Naive thymus-derived CD4-positive, alpha-beta T cell (primary cell): ENCODE measurements at regions of chr22 and their contacts with region 1.

Region 1: DNA sequence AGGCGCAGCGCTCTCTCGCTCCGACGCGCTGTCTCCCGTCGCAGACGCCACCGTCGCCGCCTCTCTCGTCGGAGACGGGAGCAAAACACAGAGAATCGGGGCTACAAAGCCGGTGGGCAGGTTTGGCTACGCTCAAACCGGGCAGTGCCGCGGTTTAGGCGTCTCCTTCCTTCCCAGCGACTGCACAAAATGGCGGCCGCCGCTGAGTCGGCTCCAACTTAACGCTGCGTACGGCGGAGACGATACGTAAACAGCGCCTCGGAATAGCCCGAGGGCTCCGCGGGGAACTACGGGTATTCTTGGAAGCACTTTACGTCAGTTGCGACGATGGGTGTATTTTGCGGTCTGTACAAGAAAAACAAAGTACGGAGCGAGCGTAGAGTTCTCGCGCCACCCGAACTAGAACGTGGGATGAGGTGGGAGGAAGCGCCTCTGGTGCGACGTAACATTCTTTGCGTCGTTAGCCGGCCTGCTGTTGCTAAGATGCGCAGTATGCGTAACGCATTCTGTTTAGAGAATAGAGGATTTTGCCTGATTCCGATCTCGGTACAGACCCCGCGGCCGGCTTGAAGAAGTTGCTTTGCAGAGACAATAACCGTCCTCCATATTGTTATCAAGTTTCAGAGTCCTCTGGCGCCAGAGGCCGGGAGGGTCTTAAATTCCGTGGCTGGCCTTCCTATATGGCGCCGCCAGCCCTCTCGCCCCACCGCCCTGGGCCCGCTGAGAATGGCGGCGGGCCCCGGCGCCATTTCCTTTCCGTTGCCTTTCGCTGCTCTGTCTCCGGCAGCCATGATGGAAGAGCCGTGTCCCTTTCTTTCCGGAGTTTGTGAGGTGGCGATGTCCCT is at the start of gene DDX17:
- DNase-seq: peak; percentile 89 to 99 (median 96)
- ATAC-seq: peak; percentile 94
- H3K4me3 ChIP-seq: peak within 1 kb of the TSS; percentile 88
- H3K4me3 Mint-ChIP-seq: peak within 1 kb of the TSS; percentile 92 to 100 (median 99)
- H3K27ac ChIP-seq: peak within 1 kb of the TSS; percentile 100
- H3K27ac Mint-ChIP-seq: peak within 1 kb of the TSS; percentile 100
- H3K4me1 ChIP-seq: peaks cover 35 to 37% of the 10 kb centered on the region in 2 donors
- H3K4me1 Mint-ChIP-seq: peaks cover 39 to 57% (median 48%) of the 10 kb centered on the region in 7 donors
- H3K27me3 ChIP-seq: no peaks in the 10 kb centered on the region
- H3K27me3 Mint-ChIP-seq: peaks cover 0 to 4% (median 0%) of the 10 kb centered on the region in 5 donors
- total RNA-seq, gene DDX17: 478 to 1,097 (median 684) TPM

Region 2: GRCh38 chr22:38201710-38202436 is 304.5 kb before region 1 on chr22 and contains the start of gene MAFF:
- CTCF ChIA-PET with region 1: no interaction called
- POLR2A ChIA-PET with region 1: no interaction called
- intact Hi-C with region 1: loop called (anchors 1 to 2 kb)
- DNase-seq: peak; percentile 62 to 88 (median 72)
- ATAC-seq: peak; percentile 87
- H3K4me3 ChIP-seq: peak within 1 kb of the TSS; percentile 77
- H3K4me3 Mint-ChIP-seq: peak within 1 kb of the TSS; percentile 80 to 93 (median 88)
- H3K27ac ChIP-seq: peak within 1 kb of the TSS; percentile 88
- H3K27ac Mint-ChIP-seq: peak within 1 kb of the TSS; percentile 84 to 97 (median 89)
- H3K4me1 ChIP-seq: peaks cover 5 to 25% of the 10 kb centered on the region in 2 donors
- H3K4me1 Mint-ChIP-seq: peaks cover 10 to 33% (median 26%) of the 10 kb centered on the region in 7 donors
- H3K27me3 ChIP-seq: no peaks in the 10 kb centered on the region
- H3K27me3 Mint-ChIP-seq: no peaks in the 10 kb centered on the region
- total RNA-seq, gene MAFF: 4.8 to 72.6 (median 5.5) TPM

Region 3: DNA sequence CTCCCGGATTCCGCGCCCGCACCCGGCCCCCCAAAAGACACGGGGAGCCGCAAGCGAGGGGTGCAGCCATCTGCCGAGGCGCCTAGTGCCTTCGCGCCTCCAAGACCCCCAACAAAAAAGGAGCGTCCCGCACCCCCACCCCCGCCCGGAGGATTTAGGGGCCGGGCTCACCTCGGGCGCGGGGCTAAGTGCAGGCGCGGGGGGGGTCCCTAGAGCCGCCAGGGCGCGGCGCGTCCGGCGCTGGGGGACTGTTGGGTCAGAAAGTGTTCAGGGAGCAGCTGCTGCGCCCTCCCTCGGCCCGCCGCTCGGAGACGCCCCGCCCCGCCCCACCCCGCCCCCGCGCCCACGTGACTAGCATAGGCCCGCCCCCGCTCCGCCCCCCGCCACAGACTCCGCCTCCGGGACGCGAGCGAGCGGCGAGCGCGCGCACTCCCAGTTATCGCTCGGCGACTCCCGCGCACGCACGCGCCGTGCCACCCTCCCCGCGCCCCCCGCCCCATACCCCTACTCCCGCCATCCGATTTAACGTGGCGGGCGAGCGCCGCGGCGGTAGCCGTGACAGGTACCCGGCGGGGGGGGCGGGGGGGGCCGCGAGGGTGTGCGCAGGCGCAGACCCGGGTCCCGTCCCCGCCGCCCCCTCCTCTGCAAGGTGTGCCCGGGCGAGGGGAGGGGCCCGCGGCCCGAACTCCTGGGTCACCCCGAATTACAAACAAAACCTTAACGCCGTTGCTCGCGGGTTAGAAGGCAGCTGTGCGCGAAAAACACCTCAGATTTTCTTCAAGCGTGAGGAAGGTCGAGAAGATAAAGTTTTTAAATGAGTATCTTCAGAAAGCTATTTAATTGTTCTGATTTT is 107.5 kb before region 1 on chr22:
- CTCF ChIA-PET with region 1: no interaction called
- POLR2A ChIA-PET with region 1: no interaction called
- intact Hi-C with region 1: loop called (anchors 5 kb)
- DNase-seq: peak; percentile 74 to 91 (median 82)
- ATAC-seq: peak; percentile 93
- H3K4me3 ChIP-seq: peak overlapping the region; percentile 46
- H3K4me3 Mint-ChIP-seq: peak overlapping the region; percentile 78 to 93 (median 85)
- H3K27ac ChIP-seq: peak overlapping the region; percentile 69
- H3K27ac Mint-ChIP-seq: peak overlapping the region in 8 of 9 donors; percentile 55 to 84 (median 76)
- H3K4me1 ChIP-seq: no peaks in the 10 kb centered on the region
- H3K4me1 Mint-ChIP-seq: peaks cover 6 to 41% (median 33%) of the 10 kb centered on the region in 7 donors
- H3K27me3 ChIP-seq: no peaks in the 10 kb centered on the region
- H3K27me3 Mint-ChIP-seq: peaks cover 0 to 30% (median 0%) of the 10 kb centered on the region in 5 donors

Region 4: GRCh38 chr22:38490915-38491314 is 15.4 kb before region 1 on chr22:
- CTCF ChIA-PET with region 1: interaction called, 3 read pairs
- POLR2A ChIA-PET with region 1: interaction called, 23 read pairs
- intact Hi-C with region 1: loop called in 1 of 2 experiments (anchors 1 kb)
- DNase-seq: no peak
- ATAC-seq: no peak
- H3K4me3 ChIP-seq: no peak overlapping the region
- H3K4me3 Mint-ChIP-seq: peak overlapping the region in 1 of 10 donors; percentile 20
- H3K27ac ChIP-seq: no peak overlapping the region
- H3K27ac Mint-ChIP-seq: peak overlapping the region in 8 of 9 donors; percentile 35 to 79 (median 72)
- H3K4me1 ChIP-seq: peaks cover under 1 to 10% of the 10 kb centered on the region in 2 donors
- H3K4me1 Mint-ChIP-seq: peaks cover 19 to 76% (median 63%) of the 10 kb centered on the region in 7 donors
- H3K27me3 ChIP-seq: no peaks in the 10 kb centered on the region
- H3K27me3 Mint-ChIP-seq: no peaks in the 10 kb centered on the region

Region 5: GRCh38 chr22:38656256-38657044 is 150.1 kb after region 1 on chr22 and contains the starts of genes CBY1 and FAM227A:
- CTCF ChIA-PET with region 1: no interaction called
- POLR2A ChIA-PET with region 1: interaction called, 3 read pairs
- intact Hi-C with region 1: loop called in 1 of 2 experiments (anchors 2 kb)
- DNase-seq: peak; percentile 79 to 94 (median 85)
- ATAC-seq: peak; percentile 92
- H3K4me3 ChIP-seq: peak within 1 kb of the TSS; percentile 98
- H3K4me3 Mint-ChIP-seq: peak within 1 kb of the TSS; percentile 94 to 96 (median 96)
- H3K27ac ChIP-seq: peak within 1 kb of the TSS; percentile 93
- H3K27ac Mint-ChIP-seq: peak within 1 kb of the TSS; percentile 92 to 99 (median 98)
- H3K4me1 ChIP-seq: peaks cover 4 to 9% of the 10 kb centered on the region in 2 donors
- H3K4me1 Mint-ChIP-seq: peaks cover 4 to 23% (median 18%) of the 10 kb centered on the region in 7 donors
- H3K27me3 ChIP-seq: no peaks in the 10 kb centered on the region
- H3K27me3 Mint-ChIP-seq: no peaks in the 10 kb centered on the region
- total RNA-seq, gene CBY1: 12.2 to 39.9 (median 15.2) TPM
- total RNA-seq, gene FAM227A: 0.05 to 1.0 (median 0.30) TPM in 4 of 5 experiments, not detected in the other

Region 6: GRCh38 chr22:38755911-38756532 is 249.7 kb after region 1 on chr22 and contains the start of gene SUN2:
- CTCF ChIA-PET with region 1: no interaction called
- POLR2A ChIA-PET with region 1: no interaction called
- intact Hi-C with region 1: loop called in 1 of 2 experiments (anchors 5 kb)
- DNase-seq: peak; percentile 89 to 98 (median 92)
- ATAC-seq: peak; percentile 85
- H3K4me3 ChIP-seq: peak within 1 kb of the TSS; percentile 95
- H3K4me3 Mint-ChIP-seq: peak within 1 kb of the TSS; percentile 95 to 99 (median 96)
- H3K27ac ChIP-seq: peak within 1 kb of the TSS; percentile 81
- H3K27ac Mint-ChIP-seq: peak within 1 kb of the TSS; percentile 89 to 100 (median 99)
- H3K4me1 ChIP-seq: peaks cover 48 to 54% of the 10 kb centered on the region in 2 donors
- H3K4me1 Mint-ChIP-seq: peaks cover 42 to 67% (median 62%) of the 10 kb centered on the region in 7 donors
- H3K27me3 ChIP-seq: no peaks in the 10 kb centered on the region
- H3K27me3 Mint-ChIP-seq: no peaks in the 10 kb centered on the region
- total RNA-seq, gene SUN2: 509 to 977 (median 558) TPM